ENCODE measurements at regions of chr2 and their contacts with region 1.

Region 1: DNA sequence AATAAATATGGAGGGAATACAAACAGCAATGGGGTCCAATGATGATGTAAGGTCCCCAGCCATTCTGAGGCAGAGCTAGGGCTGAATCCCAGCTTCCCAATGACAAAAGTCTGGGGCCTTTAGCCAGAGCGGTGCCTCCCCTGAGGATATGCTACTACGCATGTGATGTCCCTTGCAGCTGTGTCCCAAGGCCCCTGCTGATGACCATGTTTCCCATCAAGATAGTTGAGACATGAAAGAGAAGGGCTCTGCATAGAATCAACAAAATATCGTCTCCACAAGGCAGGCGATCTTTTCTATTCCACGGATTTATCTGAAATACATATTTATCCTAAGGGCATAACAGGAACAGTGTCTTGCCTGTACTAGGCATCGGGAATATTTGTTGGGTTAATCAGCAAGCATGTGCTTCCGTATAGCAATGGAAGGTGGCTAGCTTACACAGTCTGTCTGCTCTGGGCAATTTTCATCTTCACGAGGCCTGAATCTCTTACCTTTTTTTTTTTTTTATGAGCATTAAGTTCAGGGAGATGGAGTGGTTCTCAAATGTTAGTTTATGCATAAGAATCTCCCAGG is 284.6 kb downstream of the CNTNAP5 start:
- DNase-seq: no peak

Region 2: DNA sequence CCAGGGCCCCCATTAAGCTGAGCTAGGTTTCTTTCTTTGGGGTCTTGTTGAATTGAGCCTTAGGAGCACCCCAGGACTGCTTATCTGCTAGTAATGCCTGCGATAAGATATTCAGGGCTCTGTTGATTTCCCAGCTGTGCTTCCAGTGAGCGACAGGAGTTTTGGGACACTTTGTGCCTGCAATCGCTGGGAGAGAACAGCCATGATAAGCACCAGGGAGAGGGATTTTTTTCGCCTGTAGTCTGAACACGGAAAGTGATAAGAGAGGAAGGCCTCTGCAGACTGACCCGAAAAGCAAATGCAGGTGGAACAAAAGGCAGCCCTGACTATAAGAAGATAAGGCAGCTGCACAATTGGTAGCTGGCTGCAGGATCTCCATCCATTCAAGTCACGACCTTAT is 40.3 kb before region 1 on chr2:
- intact Hi-C with region 1: loop called in 1 of 2 experiments (anchors 1 kb)
- DNase-seq: no peak

Region 3: DNA sequence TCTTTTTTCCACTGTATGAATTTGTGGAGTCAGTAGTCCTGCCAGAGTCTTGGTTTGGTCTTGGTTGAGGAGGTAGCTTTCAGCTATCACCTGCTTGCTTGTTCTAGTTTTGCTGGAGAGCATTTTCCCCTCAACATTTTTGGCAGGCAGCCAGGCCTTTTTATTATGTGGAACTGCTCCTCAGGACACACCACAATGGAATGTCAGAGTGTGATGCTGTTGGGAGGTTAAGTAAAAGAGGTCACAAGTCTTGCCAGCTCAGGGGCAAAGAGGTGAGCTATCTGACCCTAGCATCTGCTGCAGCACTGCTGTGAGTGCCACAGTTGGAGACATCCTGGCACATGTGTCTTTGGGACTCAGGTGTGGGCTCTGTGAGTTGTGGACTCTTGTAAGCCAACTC is 26.5 kb before region 1 on chr2:
- intact Hi-C with region 1: no loop called
- DNase-seq: no peak

Measured in posterior vena cava (tissue), 2 donors.